HAP-1 (cell line): ENCODE measurements at regions of chr22 and their contacts with region 1.

Region 1: GRCh38 chr22:19656541-19657251 is 57.6 kb upstream of the SEPTIN5 start:
- DNase-seq: no peak
- H3K4me3 ChIP-seq: no peak overlapping the region
- H3K4me1 ChIP-seq: peaks cover 12% of the 10 kb centered on the region
- H3K27me3 ChIP-seq: no peaks in the 10 kb centered on the region; the same call in 1 of the 2 replicates

Region 2: GRCh38 chr22:19368876-19369275 is 287.8 kb before region 1 on chr22:
- in situ Hi-C with region 1: no loop called
- DNase-seq: no peak
- H3K4me3 ChIP-seq: no peak overlapping the region
- H3K4me1 ChIP-seq: no peaks in the 10 kb centered on the region
- H3K27me3 ChIP-seq: no peaks in the 10 kb centered on the region

Region 3: DNA sequence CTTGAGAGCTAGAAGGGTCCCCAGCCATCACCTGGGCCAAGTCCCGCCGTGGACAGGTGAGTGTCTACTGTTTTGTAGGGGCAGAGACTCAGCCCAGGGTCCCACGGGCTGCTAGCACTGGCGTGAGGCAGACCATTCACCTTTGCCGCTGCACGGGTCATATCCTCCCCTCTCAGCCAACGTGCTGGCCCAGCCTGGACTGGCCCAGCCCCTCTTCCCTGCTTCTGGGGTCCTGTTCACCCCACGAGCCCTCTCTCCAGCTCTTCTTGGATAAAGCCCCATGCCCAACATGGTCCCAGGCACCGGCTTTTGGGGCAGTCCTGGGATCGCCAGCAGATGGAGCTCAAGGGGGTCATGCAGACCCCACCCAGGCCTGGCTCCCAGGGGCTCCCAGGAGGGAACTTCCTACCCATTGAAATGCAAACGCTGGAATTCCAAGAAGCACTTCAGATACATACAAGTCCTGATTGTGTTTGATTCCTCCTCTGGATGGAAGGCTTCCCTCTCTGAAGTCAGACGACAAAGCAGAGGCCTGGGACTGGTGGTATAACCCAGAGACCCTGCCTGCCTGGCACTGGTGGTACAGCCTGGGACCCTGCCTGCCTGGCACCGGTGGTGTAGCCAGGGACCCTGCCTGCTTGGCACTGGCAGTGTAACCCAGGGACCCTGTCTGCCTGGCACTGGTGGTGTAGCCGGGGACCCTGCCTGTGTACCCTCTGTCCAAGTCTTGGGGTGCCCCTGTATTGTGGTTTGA is 48.7 kb after region 1 on chr22:
- in situ Hi-C with region 1: loop called (anchors 5 kb)
- DNase-seq: peak; percentile 91
- H3K4me3 ChIP-seq: no peak overlapping the region
- H3K4me1 ChIP-seq: peaks cover 12% of the 10 kb centered on the region
- H3K27me3 ChIP-seq: no peaks in the 10 kb centered on the region; the same call in 1 of the 2 replicates

Region 4: GRCh38 chr22:20904008-20904979 is 1247.6 kb after region 1 on chr22:
- in situ Hi-C with region 1: no loop called
- DNase-seq: no peak
- H3K4me3 ChIP-seq: no peak overlapping the region
- H3K4me1 ChIP-seq: no peaks in the 10 kb centered on the region
- H3K27me3 ChIP-seq: no peaks in the 10 kb centered on the region